Activated CD4-positive, alpha-beta T cell treated with anti-CD3 and anti-CD28 coated beads, Interleukin-2, amount 10 ng/mL, durations not matched to agents 24 days and 14 days (primary cell): ENCODE measurements at regions of chrX and their contacts with region 1.

Region 1: DNA sequence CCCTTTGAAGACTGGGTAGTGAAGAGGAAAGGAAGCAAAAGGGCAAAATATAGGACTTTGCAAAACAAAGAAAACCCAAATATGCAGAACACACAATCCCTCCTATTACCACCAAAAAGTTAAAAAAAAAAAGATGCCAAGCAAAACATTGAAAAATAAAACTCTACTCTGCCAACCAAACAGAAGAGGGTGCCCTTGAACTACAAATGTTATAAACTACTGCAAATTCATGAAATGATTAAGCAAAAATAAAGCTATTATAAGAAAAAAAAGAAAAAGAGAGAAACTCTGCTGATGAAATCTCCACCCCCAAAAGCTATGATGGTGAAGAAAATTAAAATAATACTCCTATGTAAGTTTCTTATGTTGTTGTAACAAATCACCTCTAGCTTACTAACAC is 168.5 kb upstream of the STK26 start:
- DNase-seq: no peak
- H3K4me3 Mint-ChIP-seq: no peak overlapping the region
- H3K27ac Mint-ChIP-seq: no peak overlapping the region
- H3K4me1 Mint-ChIP-seq: no peaks in the 10 kb centered on the region
- H3K27me3 Mint-ChIP-seq: no peaks in the 10 kb centered on the region

Region 2: DNA sequence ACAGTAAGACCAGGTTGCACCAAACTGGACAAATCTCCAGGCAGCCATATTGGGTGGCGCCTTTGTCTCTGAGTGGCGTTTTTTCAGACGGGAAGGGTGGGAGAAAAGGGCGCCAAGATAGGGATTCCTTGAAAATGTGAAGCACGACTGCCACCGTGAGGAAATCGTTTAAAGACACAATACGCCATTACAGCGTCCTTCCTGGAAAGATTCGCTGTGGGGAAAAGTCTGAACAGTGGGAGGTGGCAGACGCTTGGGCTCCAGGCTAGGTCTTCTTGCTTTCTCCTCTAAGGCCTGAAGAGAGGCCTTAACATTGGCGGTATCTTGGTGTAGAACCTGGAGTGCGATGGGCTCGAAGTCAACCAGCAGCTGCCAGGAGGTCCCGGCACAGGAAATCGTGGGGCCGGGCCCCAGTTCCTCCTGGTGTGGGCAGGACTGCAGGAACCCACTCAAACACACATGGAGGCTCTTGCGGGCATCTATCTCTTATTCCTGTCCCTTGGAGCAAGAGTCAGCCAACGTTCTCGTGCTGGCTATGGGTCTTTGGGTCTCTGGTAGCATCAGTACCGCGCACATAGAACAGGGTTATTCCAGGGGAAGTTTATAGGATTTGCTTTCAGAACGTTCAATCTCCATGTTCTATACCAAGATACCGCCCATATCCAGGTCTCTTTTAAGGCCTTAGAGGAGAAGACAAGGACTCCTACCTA is 101.9 kb before region 1 on chrX:
- intact Hi-C with region 1: no loop called
- DNase-seq: no peak
- H3K4me3 Mint-ChIP-seq: no peak overlapping the region
- H3K27ac Mint-ChIP-seq: no peak overlapping the region
- H3K4me1 Mint-ChIP-seq: no peaks in the 10 kb centered on the region
- H3K27me3 Mint-ChIP-seq: no peaks in the 10 kb centered on the region

Region 3: DNA sequence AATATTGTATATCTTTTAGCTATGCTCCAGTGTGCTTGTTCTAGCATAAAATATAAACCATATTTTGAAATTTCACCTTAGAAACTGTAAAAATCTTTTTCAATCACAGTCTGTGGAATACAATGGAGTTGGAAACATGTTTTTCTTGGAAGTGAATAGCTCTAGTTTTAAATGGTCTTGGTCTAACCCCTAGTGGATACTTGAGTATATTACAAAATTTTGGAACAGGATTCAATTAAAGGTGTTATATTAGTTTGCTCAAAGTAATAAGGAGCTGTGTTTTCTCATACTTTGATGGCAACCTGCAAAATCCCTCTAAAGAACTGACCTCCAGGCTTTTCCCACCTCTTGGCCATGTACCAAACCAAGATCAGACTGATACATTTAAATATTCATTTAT is 216.7 kb after region 1 on chrX:
- intact Hi-C with region 1: loop called (anchors 10 kb)
- DNase-seq: no peak
- H3K4me3 Mint-ChIP-seq: no peak overlapping the region
- H3K27ac Mint-ChIP-seq: no peak overlapping the region
- H3K4me1 Mint-ChIP-seq: no peaks in the 10 kb centered on the region
- H3K27me3 Mint-ChIP-seq: no peaks in the 10 kb centered on the region